Activated CD4-positive, alpha-beta T cell treated with anti-CD3 and anti-CD28 coated beads for 36 hours (primary cell): ENCODE measurements at regions of chr5 and their contacts with region 1.

Region 1: GRCh38 chr5:81194633-81195333 is 38.3 kb upstream of the CKMT2 start:
- DNase-seq: peak; percentile 92
- ATAC-seq: peak; percentile 99
- H3K4me3 Mint-ChIP-seq: peak overlapping the region; percentile 15
- H3K27ac Mint-ChIP-seq: no peak overlapping the region
- H3K4me1 Mint-ChIP-seq: peaks cover 9% of the 10 kb centered on the region
- H3K27me3 Mint-ChIP-seq: no peaks in the 10 kb centered on the region

Region 2: DNA sequence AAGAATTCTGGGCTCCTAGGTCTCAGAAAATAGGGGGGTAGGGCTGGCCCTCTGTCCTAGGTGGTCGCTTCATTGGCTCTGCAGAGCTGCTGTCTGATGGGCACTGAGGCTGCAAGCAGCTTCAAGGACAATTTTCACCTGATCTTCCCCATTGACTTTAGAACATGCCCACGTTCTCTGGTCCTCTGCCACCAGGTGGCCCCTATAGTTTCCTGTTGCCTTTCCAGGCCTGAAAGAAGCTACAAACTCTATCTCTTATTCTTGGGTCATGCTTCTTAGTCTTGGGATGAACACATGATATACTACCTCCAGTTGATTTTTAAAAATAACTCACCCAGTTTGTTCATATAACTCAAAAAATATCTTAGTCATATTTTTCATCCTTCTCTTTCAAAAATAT is 848.7 kb before region 1 on chr5:
- CTCF ChIA-PET with region 1: no interaction called
- POLR2A ChIA-PET with region 1: no interaction called
- intact Hi-C with region 1: loop called in 1 of 2 experiments (anchors 10 kb)
- DNase-seq: peak; percentile 60
- ATAC-seq: peak; percentile 79
- H3K4me3 Mint-ChIP-seq: no peak overlapping the region
- H3K27ac Mint-ChIP-seq: no peak overlapping the region
- H3K4me1 Mint-ChIP-seq: no peaks in the 10 kb centered on the region
- H3K27me3 Mint-ChIP-seq: peaks cover 6% of the 10 kb centered on the region

Region 3: DNA sequence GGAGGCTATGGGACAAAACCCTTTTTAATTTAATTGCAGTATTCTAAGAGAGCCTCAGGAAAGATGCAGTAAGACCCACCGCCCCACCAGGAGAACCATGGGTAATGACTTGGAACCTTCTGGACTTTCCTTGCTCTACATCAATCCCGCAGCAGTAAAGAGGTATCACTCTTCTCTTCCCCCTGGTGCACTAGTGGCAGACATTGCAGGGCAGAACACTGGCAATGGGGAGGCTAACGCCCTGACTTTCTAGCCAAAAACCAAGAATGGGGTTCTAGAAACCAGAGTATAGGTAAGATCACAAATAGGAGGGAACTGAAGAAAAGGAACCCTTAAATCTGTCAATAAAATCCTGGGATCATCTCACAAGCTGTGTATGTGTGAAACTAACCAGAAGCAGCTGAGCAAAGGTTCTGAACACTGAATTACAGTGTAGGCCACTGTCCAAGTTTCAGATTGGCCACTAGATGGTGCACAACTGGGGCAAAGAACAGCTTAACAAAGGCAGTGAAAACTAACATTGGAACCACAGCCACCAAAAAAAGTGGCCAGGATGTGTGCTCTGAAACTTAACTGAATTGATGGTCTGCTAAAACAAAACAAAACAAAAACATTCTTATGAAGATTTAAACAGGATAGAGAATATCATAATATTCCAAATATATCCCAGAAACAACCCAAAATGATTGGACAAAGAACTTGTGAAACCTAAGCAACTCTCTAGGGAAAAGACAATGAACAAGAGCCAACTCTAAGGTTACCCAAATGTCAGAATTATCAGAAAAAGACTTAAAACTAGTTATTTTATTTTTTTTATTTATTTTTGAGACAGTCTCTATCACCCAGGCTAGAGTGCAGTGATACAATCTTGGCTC is 713.5 kb before region 1 on chr5:
- CTCF ChIA-PET with region 1: interaction called, 3 read pairs
- POLR2A ChIA-PET with region 1: interaction called, 3 read pairs
- intact Hi-C with region 1: loop called (anchors 1 to 2 kb)
- DNase-seq: peak; percentile 60
- ATAC-seq: peak; percentile 84
- H3K4me3 Mint-ChIP-seq: no peak overlapping the region
- H3K27ac Mint-ChIP-seq: no peak overlapping the region
- H3K4me1 Mint-ChIP-seq: no peaks in the 10 kb centered on the region
- H3K27me3 Mint-ChIP-seq: no peaks in the 10 kb centered on the region

Region 4: DNA sequence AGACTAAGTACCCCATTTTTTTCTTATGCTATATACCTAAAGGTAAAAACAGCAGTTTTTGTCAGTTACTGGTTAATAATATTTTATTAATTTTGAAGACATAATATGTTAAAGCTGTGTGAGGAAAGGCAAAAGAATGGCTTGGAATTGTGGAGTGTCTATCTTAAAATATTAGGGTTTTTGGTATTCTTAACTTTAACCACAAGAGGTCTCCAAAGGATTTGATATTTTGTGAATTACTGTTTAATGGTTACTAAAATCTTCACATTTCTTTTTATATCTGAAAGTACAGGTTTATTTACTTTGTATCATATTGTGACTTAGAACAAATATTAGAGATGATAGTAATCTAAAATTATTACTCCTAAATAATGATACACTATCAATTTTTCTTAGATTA is 508.0 kb before region 1 on chr5:
- CTCF ChIA-PET with region 1: interaction called, 5 read pairs
- POLR2A ChIA-PET with region 1: no interaction called
- intact Hi-C with region 1: loop called (anchors 2 to 5 kb)
- DNase-seq: no peak
- ATAC-seq: no peak
- H3K4me3 Mint-ChIP-seq: no peak overlapping the region
- H3K27ac Mint-ChIP-seq: no peak overlapping the region
- H3K4me1 Mint-ChIP-seq: peaks cover 15% of the 10 kb centered on the region
- H3K27me3 Mint-ChIP-seq: no peaks in the 10 kb centered on the region

Region 5: GRCh38 chr5:81165493-81166119 is 29.2 kb before region 1 on chr5:
- CTCF ChIA-PET with region 1: interaction called, 3 read pairs
- POLR2A ChIA-PET with region 1: no interaction called
- intact Hi-C with region 1: loop called in 1 of 2 experiments (anchors 1 kb)
- DNase-seq: peak; percentile 84
- ATAC-seq: peak; percentile 87
- H3K4me3 Mint-ChIP-seq: no peak overlapping the region
- H3K27ac Mint-ChIP-seq: no peak overlapping the region
- H3K4me1 Mint-ChIP-seq: peaks cover 16% of the 10 kb centered on the region
- H3K27me3 Mint-ChIP-seq: no peaks in the 10 kb centered on the region

Region 6: DNA sequence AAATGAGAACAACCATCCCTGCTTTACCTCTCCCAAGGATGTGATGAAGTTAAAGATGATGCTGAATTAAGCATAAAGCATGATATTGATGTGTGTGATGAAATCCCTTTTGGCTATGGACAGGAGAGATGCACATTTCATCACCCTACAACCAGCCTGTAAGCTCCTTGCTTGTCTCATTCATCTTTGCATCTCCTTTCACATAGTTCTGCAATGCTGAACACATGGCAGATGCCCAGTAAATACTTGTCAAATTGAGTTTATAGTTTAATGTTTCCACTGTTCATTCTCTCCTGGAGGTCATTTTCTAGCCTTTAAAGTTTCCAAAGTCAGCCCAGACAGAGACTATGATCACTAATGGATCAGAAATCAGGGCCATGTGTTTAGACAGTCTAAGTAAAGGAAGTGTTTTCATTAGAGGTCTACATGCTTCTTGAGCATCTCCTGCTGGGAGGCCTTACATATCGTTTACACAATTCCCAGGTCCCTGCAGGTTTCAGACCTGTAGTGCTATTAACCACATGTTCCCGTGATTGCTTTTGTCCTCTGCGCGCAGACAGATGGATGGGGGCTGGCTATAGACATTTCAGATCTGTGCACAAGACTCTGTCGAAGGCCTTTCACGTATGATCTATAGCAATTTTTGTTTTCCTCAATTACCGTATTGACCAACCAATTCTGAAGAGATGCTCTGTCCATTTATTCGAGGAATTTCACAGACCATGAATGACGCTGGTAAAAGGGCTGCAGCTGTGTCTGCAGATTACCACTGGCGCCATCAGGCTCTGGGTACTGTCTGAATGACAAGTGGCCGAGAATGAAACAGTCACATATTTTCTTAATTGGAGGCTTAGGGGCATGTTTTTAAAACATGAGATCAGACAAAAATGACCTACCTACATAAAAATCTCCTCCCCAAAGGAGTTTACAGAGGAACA is 10.7 kb before region 1 on chr5:
- CTCF ChIA-PET with region 1: interaction called, 15 read pairs
- POLR2A ChIA-PET with region 1: no interaction called
- intact Hi-C with region 1: no loop called
- DNase-seq: no peak
- ATAC-seq: no peak
- H3K4me3 Mint-ChIP-seq: no peak overlapping the region
- H3K27ac Mint-ChIP-seq: peak overlapping the region; percentile 0
- H3K4me1 Mint-ChIP-seq: peaks cover 8% of the 10 kb centered on the region
- H3K27me3 Mint-ChIP-seq: no peaks in the 10 kb centered on the region

Region 7: DNA sequence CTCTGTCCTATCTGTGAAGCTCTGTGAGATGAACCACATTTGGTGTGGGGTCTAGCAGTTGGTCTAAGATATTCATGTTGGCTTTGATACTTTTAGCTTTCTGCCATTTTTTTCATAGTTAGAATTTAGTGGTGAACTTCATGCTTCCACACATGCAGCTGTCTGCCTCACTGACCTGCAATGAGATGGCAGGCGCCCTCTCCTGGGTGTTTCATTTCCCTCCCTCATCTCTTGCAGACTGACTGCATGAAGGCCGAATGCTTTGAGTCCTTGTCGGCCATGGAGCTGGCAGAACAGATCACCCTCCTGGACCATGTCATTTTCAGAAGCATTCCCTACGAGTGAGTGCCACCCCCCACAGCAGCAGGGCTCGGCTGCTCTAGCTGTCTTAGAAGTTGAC is 12.2 kb after region 1 on chr5:
- CTCF ChIA-PET with region 1: interaction called, 18 read pairs
- POLR2A ChIA-PET with region 1: no interaction called
- intact Hi-C with region 1: no loop called
- DNase-seq: no peak
- ATAC-seq: no peak
- H3K4me3 Mint-ChIP-seq: no peak overlapping the region
- H3K27ac Mint-ChIP-seq: no peak overlapping the region
- H3K4me1 Mint-ChIP-seq: peaks cover 7% of the 10 kb centered on the region
- H3K27me3 Mint-ChIP-seq: no peaks in the 10 kb centered on the region

Region 8: GRCh38 chr5:81219389-81219788 is 24.6 kb after region 1 on chr5:
- CTCF ChIA-PET with region 1: no interaction called
- POLR2A ChIA-PET with region 1: no interaction called
- intact Hi-C with region 1: no loop called
- DNase-seq: no peak
- ATAC-seq: no peak
- H3K4me3 Mint-ChIP-seq: no peak overlapping the region
- H3K27ac Mint-ChIP-seq: no peak overlapping the region
- H3K4me1 Mint-ChIP-seq: no peaks in the 10 kb centered on the region
- H3K27me3 Mint-ChIP-seq: no peaks in the 10 kb centered on the region